ENCODE measurements at regions of chr15 and their contacts with region 1.

Region 1: GRCh38 chr15:55290528-55291057 is 980 bp upstream of the RAB27A start:
- DNase-seq: peak; percentile 72 to 84 (median 80)
- ATAC-seq: peak; percentile 87
- H3K4me3 ChIP-seq: peak overlapping the region; percentile 90
- H3K4me3 Mint-ChIP-seq: peak overlapping the region; percentile 85 to 95 (median 90)
- H3K27ac ChIP-seq: peak overlapping the region; percentile 95
- H3K27ac Mint-ChIP-seq: peak overlapping the region; percentile 87 to 94 (median 92)
- H3K4me1 ChIP-seq: peaks cover 13 to 14% of the 10 kb centered on the region in 2 donors
- H3K4me1 Mint-ChIP-seq: peaks cover 20 to 40% (median 34%) of the 10 kb centered on the region in 7 donors
- H3K27me3 ChIP-seq: no peaks in the 10 kb centered on the region
- H3K27me3 Mint-ChIP-seq: peaks cover 0 to 4% (median 0%) of the 10 kb centered on the region in 5 donors

Region 2: DNA sequence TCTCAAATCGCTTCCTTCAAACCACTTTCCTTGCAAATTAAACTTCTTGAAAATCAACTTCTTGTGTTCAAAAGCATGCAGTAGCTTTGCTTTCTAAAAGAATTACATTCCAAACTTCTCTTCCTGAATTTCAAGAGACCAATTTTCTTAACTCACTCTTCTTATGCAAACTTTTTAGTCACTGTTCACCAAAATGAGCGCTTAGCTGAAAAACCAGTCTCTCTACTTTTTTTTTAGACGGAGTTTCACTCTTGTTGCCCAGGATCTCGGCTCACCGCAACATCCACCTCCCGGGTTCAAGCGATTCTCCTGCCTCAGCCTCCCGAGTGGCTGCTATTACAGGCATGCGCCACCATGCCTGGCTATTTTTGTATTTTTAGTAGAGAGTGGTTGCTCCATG is 1391.2 kb before region 1 on chr15:
- CTCF ChIA-PET with region 1: no interaction called
- POLR2A ChIA-PET with region 1: no interaction called
- intact Hi-C with region 1: no loop called
- DNase-seq: no peak
- ATAC-seq: no peak
- H3K4me3 ChIP-seq: no peak overlapping the region
- H3K4me3 Mint-ChIP-seq: no peak overlapping the region
- H3K27ac ChIP-seq: no peak overlapping the region
- H3K27ac Mint-ChIP-seq: no peak overlapping the region
- H3K4me1 ChIP-seq: no peaks in the 10 kb centered on the region
- H3K4me1 Mint-ChIP-seq: no peaks in the 10 kb centered on the region
- H3K27me3 ChIP-seq: no peaks in the 10 kb centered on the region
- H3K27me3 Mint-ChIP-seq: peaks cover 0 to 16% (median 12%) of the 10 kb centered on the region in 5 donors

Region 3: DNA sequence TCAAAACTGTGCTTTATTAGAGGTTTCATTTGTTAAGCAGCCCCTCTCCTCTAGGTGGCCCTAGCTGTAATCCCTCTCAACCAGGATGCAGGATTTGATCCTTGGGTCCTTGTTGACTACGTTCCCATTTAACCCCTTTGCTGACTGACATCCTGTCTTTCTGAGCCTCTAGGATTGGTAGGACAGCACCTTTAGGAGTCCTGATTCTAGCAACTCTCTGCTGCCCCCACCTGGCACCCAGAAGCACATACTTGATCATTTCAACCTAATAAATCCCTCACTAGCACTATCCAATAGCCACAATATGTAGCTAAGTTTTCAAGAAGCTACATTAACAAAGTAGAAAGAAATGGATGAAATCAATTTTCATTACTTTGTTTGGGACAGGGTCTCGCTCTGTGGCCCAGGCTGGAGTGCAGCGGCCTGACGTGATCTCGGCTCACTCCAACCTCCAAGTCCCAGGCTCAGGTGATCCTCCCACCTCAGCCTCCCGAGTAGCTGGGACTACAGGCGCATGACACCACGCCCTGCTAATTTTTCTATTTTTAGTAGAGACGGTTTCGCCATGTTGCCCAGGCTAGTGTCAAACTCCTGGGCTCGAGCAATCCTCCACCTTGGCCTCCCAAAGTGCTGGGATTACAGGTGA is 122.1 kb before region 1 on chr15:
- CTCF ChIA-PET with region 1: no interaction called
- POLR2A ChIA-PET with region 1: no interaction called
- intact Hi-C with region 1: loop called in 1 of 2 experiments (anchors 1 kb)
- DNase-seq: peak in 7 of 9 donors; percentile 12 to 43 (median 29)
- ATAC-seq: peak; percentile 77
- H3K4me3 ChIP-seq: no peak overlapping the region
- H3K4me3 Mint-ChIP-seq: no peak overlapping the region
- H3K27ac ChIP-seq: no peak overlapping the region
- H3K27ac Mint-ChIP-seq: no peak overlapping the region
- H3K4me1 ChIP-seq: no peaks in the 10 kb centered on the region
- H3K4me1 Mint-ChIP-seq: peaks cover 0 to 3% (median 0%) of the 10 kb centered on the region in 7 donors
- H3K27me3 ChIP-seq: no peaks in the 10 kb centered on the region
- H3K27me3 Mint-ChIP-seq: no peaks in the 10 kb centered on the region

Region 4: GRCh38 chr15:55221090-55222011 is 69.2 kb before region 1 on chr15:
- CTCF ChIA-PET with region 1: interaction called, 28 read pairs
- POLR2A ChIA-PET with region 1: interaction called, 7 read pairs
- intact Hi-C with region 1: loop called (anchors 1 kb)
- DNase-seq: peak in 1 of 9 donors; percentile 26
- ATAC-seq: peak; percentile 48
- H3K4me3 ChIP-seq: no peak overlapping the region
- H3K4me3 Mint-ChIP-seq: peak overlapping the region in 5 of 10 donors; percentile 17 to 69 (median 38)
- H3K27ac ChIP-seq: no peak overlapping the region
- H3K27ac Mint-ChIP-seq: peak overlapping the region in 5 of 9 donors; percentile 11 to 87 (median 38)
- H3K4me1 ChIP-seq: peaks cover 43 to 54% of the 10 kb centered on the region in 2 donors
- H3K4me1 Mint-ChIP-seq: peaks cover 44 to 71% (median 51%) of the 10 kb centered on the region in 7 donors
- H3K27me3 ChIP-seq: no peaks in the 10 kb centered on the region
- H3K27me3 Mint-ChIP-seq: no peaks in the 10 kb centered on the region

Region 5: GRCh38 chr15:55255714-55256113 is 34.9 kb before region 1 on chr15:
- CTCF ChIA-PET with region 1: interaction called, 4 read pairs
- POLR2A ChIA-PET with region 1: interaction called, 5 read pairs
- intact Hi-C with region 1: loop called in 1 of 2 experiments (anchors 1 kb)
- DNase-seq: peak in 2 of 9 donors; percentile 13 to 31
- ATAC-seq: peak; percentile 64
- H3K4me3 ChIP-seq: peak overlapping the region; percentile 56
- H3K4me3 Mint-ChIP-seq: peak overlapping the region; percentile 71 to 86 (median 84)
- H3K27ac ChIP-seq: peak overlapping the region; percentile 54
- H3K27ac Mint-ChIP-seq: peak overlapping the region; percentile 80 to 96 (median 89)
- H3K4me1 ChIP-seq: peaks cover 40 to 62% of the 10 kb centered on the region in 2 donors
- H3K4me1 Mint-ChIP-seq: peaks cover 45 to 67% (median 63%) of the 10 kb centered on the region in 7 donors
- H3K27me3 ChIP-seq: no peaks in the 10 kb centered on the region
- H3K27me3 Mint-ChIP-seq: no peaks in the 10 kb centered on the region

Region 6: DNA sequence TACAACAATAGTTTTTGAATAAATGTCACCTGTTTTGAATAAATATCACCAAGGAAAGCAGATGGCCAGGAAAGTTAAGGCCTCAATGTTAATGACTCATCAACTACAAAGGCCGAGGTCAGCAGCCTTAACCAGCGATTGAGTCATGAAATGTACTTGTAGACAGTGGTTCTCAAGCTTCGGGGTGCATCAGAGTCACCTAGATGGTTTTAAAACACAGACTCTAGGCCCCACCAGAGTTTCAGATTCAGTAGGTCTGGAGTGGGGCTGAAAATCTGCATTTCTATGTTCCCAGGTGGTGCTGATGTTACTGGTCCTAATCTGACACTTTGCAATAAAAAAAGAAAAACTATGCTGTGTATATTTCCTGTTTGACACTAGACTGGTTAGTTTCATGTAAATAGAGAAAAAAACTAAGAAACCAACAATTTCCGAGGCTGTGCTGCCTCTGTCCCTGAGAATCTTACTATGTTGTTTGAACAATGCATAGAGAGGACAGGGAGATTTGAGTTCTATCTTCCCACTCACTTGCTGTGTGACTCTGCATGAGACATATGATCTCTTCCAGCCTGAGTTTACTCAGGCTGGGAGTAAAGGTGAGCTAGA is 10.7 kb before region 1 on chr15:
- CTCF ChIA-PET with region 1: interaction called, 4 read pairs
- POLR2A ChIA-PET with region 1: interaction called, 4 read pairs
- intact Hi-C with region 1: loop called in 1 of 2 experiments (anchors 1 kb)
- DNase-seq: peak in 5 of 9 donors; percentile 4 to 55 (median 20)
- ATAC-seq: peak; percentile 68
- H3K4me3 ChIP-seq: peak overlapping the region; percentile 21
- H3K4me3 Mint-ChIP-seq: peak overlapping the region; percentile 16 to 82 (median 61)
- H3K27ac ChIP-seq: peak overlapping the region; percentile 59
- H3K27ac Mint-ChIP-seq: peak overlapping the region; percentile 68 to 95 (median 87)
- H3K4me1 ChIP-seq: peaks cover 43 to 89% of the 10 kb centered on the region in 2 donors
- H3K4me1 Mint-ChIP-seq: peaks cover 38 to 99% (median 90%) of the 10 kb centered on the region in 7 donors
- H3K27me3 ChIP-seq: no peaks in the 10 kb centered on the region
- H3K27me3 Mint-ChIP-seq: no peaks in the 10 kb centered on the region

Region 7: DNA sequence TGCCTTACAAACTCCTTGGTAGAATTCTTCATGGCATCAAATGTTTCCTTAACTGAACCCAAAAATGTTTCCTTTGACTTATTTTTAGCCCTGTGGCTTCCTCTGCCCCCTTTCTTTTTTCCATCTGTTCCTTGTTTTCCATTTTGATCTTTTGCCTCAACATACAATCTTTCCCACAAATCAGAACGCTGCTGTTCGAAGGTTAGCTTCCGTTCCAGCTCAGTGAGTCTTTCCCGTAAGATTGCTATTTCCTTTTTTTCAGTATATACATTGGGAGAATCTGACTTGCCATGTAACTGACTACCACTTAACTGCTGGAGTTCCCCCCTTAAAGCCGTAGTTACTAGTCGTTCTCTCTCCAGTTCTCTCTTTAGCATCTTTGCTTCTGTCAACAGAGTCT is 69.7 kb after region 1 on chr15:
- CTCF ChIA-PET with region 1: no interaction called
- POLR2A ChIA-PET with region 1: no interaction called
- intact Hi-C with region 1: no loop called
- DNase-seq: no peak
- ATAC-seq: no peak
- H3K4me3 ChIP-seq: no peak overlapping the region
- H3K4me3 Mint-ChIP-seq: no peak overlapping the region
- H3K27ac ChIP-seq: no peak overlapping the region
- H3K27ac Mint-ChIP-seq: peak overlapping the region in 4 of 9 donors; percentile 1 to 69 (median 30)
- H3K4me1 ChIP-seq: no peaks in the 10 kb centered on the region
- H3K4me1 Mint-ChIP-seq: peaks cover 0 to 10% (median 0%) of the 10 kb centered on the region in 7 donors
- H3K27me3 ChIP-seq: no peaks in the 10 kb centered on the region
- H3K27me3 Mint-ChIP-seq: no peaks in the 10 kb centered on the region

Region 8: DNA sequence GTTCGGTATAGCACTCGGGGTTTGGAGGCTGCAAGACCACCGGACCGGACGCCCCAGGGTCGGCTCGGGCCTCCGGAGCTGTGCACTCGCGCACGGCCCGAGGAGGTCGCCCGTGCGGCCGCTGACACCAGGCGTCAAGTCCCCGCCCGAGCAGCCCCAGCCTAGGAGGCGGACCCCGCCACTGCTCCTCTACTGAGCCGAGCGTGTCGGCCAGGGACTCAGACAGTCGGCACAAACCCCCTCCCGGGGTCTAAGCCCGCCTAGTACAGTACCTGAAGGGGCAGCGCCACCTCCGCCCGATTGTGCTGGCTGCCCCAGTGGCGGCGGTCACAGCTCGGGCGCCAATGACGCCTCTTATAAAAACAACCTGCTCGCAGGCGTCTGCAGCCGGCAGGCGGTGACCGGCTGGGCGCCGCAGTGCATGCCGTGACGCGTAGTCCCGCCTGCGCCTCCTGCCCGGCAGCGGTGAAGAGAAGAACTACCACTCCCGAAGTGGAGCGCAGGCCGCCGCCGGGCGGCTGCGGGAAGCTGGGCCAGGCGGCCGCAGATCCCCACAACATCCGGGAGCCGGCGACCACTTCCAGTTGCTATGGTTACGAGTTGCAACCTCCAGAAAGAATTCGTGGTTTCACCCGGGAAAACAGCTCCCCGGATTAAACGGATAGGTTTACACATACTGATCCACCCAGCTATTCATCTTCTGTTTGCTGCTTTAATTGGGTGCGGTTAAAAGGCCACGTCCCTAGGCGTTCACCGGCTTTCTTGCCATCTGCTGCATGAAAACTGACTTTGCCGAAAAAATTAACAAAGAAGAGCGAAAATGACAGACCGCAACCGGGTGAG is 117.6 kb after region 1 on chr15 and contains the starts of genes CCPG1 and PIERCE2:
- CTCF ChIA-PET with region 1: interaction called, 3 read pairs
- POLR2A ChIA-PET with region 1: interaction called, 3 read pairs
- intact Hi-C with region 1: loop called (anchors 1 kb)
- DNase-seq: peak; percentile 80 to 89 (median 85)
- ATAC-seq: peak; percentile 95
- H3K4me3 ChIP-seq: peak within 1 kb of the TSS; percentile 70
- H3K4me3 Mint-ChIP-seq: peak within 1 kb of the TSS; percentile 88 to 97 (median 94)
- H3K27ac ChIP-seq: peak within 1 kb of the TSS; percentile 86
- H3K27ac Mint-ChIP-seq: peak within 1 kb of the TSS; percentile 82 to 97 (median 89)
- H3K4me1 ChIP-seq: peaks cover 12 to 20% of the 10 kb centered on the region in 2 donors
- H3K4me1 Mint-ChIP-seq: peaks cover 18 to 52% (median 37%) of the 10 kb centered on the region in 7 donors
- H3K27me3 ChIP-seq: no peaks in the 10 kb centered on the region
- H3K27me3 Mint-ChIP-seq: peaks cover 0 to 2% (median 0%) of the 10 kb centered on the region in 5 donors
- total RNA-seq, gene CCPG1: 17.9 to 40.9 (median 28.4) TPM
- total RNA-seq, gene PIERCE2: 0.42 TPM in 1 of 5 experiments, not detected in the others

Region 9: DNA sequence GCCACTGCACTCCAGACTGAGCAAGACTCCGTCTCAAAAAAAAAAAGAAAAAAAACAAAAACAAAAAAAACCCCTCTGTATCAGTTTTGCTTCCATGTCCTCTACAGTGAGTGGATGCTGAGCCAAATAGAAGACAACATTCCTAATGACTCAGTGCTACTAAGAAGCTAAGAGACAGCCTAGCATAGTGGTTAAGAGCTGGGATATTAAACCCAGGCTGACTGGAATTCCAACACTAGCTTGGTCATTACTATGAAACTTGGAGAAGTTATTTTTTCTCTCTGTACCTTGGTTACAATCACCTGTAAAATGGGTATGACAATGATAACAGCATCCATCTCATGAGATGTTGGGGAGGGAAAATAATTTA is 358.4 kb after region 1 on chr15:
- CTCF ChIA-PET with region 1: no interaction called
- POLR2A ChIA-PET with region 1: no interaction called
- intact Hi-C with region 1: loop called in 1 of 2 experiments (anchors 5 kb)
- DNase-seq: no peak
- ATAC-seq: no peak
- H3K4me3 ChIP-seq: no peak overlapping the region
- H3K4me3 Mint-ChIP-seq: no peak overlapping the region
- H3K27ac ChIP-seq: no peak overlapping the region
- H3K27ac Mint-ChIP-seq: no peak overlapping the region
- H3K4me1 ChIP-seq: no peaks in the 10 kb centered on the region
- H3K4me1 Mint-ChIP-seq: no peaks in the 10 kb centered on the region
- H3K27me3 ChIP-seq: no peaks in the 10 kb centered on the region
- H3K27me3 Mint-ChIP-seq: peaks cover 0 to 6% (median 0%) of the 10 kb centered on the region in 5 donors

Measured in naive thymus-derived CD4-positive, alpha-beta T cell (primary cell).